Dorsolateral prefrontal cortex (tissue), 120 donors: ENCODE measurements at regions of chr4 and their contacts with region 1.

Region 1: DNA sequence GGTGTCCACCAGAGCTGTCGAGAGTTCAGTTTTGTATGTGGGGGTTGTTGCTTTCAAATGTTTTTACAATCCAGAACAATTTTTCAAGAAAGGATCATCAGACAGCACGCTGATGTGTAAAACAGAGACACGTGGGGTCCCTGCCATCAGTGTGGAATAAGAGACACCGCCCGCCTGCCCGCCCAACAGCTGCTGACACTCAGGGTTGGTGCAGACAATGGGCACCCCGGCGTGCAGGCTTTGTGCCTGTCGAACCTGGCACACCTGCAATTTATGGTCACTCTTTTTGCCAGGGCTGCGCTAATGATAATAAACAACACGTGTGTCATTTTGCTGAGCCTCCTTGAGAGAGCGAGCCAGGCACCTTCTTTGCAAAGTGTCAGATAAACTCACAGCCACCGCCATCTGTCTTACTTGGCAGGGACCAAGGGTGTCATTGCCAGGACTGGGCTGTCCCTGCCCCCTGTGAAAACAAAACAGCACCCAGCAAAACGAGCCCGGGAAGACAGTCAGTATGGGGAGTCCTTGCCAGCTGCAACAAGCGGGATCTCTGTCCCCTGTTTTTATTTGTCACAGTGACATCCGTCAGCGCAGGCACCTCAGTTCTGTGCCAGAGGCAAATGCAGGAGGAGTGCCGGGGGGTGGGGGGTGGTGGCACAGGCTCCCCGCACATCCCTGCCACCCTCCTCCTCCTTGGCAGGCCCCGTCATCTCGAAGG is 69.1 kb downstream of the PSAPL1 start:
- DNase-seq: peak; percentile 75 to 95 (median 89)
- H3K4me3 ChIP-seq: peak overlapping the region in 29 of 59 donors; percentile 14 to 56 (median 36)
- H3K27ac ChIP-seq: peak overlapping the region; percentile 28 to 98 (median 89)
- H3K27me3 ChIP-seq: peaks cover 0 to 2% (median 0%) of the 10 kb centered on the region in 45 donors
- CTCF ChIP-seq: peak in 6 of 56 donors; percentile 7 to 21 (median 10)

Region 2: GRCh38 chr4:7313347-7313811 is 52.2 kb before region 1 on chr4:
- intact Hi-C with region 1: loop called in 1 of 2 experiments (anchors 5 kb)
- DNase-seq: peak in 7 of 10 donors; percentile 62 to 88 (median 86)
- H3K4me3 ChIP-seq: no peak overlapping the region
- H3K27ac ChIP-seq: peak overlapping the region; percentile 9 to 100 (median 96)
- H3K27me3 ChIP-seq: no peaks in the 10 kb centered on the region
- CTCF ChIP-seq: peak in 3 of 56 donors; percentile 6 to 15 (median 12)

Region 3: DNA sequence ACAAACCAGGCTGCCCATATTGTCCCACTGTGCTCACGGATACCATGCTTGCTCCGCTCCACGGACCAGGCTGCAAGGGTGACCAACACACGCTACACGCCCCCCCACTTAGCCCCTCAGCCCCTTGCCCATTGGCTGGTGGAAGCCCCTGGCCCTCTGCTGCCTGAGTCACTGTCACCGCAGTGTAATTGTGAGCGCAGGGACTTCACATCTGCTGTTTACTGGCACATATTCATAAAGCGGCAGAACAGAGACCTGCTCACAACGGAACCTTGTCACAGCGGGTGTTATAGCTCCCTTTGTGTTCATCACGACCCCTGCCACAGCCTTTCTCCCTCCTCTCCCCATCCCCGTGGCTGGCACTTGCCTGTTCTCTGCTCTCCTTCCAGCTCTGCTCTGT is 14.6 kb before region 1 on chr4:
- intact Hi-C with region 1: loop called in 1 of 2 experiments (anchors 1 kb)
- DNase-seq: peak in 8 of 10 donors; percentile 46 to 91 (median 81)
- H3K4me3 ChIP-seq: no peak overlapping the region
- H3K27ac ChIP-seq: peak overlapping the region in 58 of 59 donors; percentile 42 to 99 (median 91)
- H3K27me3 ChIP-seq: no peaks in the 10 kb centered on the region
- CTCF ChIP-seq: peak in 3 of 56 donors; percentile 9 to 30 (median 12)